Activated B cell treated with CpG ODN at 0.5 μM for 24 hours (primary cell): ENCODE measurements at regions of chr16 and their contacts with region 1.

Region 1: DNA sequence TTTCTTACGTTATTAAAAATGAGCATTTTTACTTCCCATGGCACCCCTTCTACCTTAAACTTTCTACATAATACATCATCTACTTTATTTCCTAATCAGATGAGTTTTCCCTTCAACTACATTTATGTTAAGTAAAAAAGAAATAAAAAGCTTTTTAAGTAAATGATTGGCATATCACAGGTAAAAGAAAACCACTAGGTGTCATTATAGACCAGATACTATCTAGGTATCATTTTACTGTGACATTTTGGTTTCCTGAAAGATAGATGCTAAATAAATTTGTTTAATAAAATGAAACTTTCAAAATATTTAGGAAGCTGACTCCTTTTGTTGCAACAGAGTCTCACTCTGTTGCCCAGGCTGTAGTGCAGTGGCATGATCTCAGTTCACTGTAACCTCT is 3.8 kb upstream of the CMTM1 start:
- DNase-seq: no peak
- ATAC-seq: no peak
- H3K4me3 Mint-ChIP-seq: no peak overlapping the region
- H3K27ac Mint-ChIP-seq: no peak overlapping the region
- H3K4me1 Mint-ChIP-seq: peaks cover 12% of the 10 kb centered on the region
- H3K27me3 Mint-ChIP-seq: no peaks in the 10 kb centered on the region
- CTCF ChIP-seq: no peak

Region 2: GRCh38 chr16:66728117-66728787 is 165.8 kb after region 1 on chr16:
- CTCF ChIA-PET with region 1: interaction called, 3 read pairs
- POLR2A ChIA-PET with region 1: no interaction called
- intact Hi-C with region 1: loop called (anchors 5 kb)
- DNase-seq: no peak
- ATAC-seq: peak; percentile 60
- H3K4me3 Mint-ChIP-seq: no peak overlapping the region
- H3K27ac Mint-ChIP-seq: no peak overlapping the region
- H3K4me1 Mint-ChIP-seq: peaks cover 2% of the 10 kb centered on the region
- H3K27me3 Mint-ChIP-seq: no peaks in the 10 kb centered on the region
- CTCF ChIP-seq: peak; percentile 71

Region 3: DNA sequence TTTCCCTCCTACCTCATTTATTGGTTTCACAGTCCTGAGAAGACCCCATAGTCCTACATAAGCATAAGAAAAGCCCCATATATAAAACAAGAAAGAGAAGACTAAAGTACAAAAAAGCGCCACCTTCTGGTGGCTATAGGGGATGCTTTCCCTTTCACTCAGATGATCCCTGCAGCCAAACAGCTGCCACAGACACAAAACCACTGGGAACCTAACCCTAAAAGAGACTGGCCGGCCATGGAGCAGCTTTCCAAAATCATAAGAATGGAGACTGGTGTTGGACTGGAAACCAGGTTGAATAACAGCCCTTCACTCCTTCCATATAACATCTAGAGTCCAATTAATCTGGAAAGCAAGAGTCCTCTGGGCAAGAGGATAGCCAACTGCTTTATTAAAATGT is 177.6 kb after region 1 on chr16:
- CTCF ChIA-PET with region 1: interaction called, 4 read pairs
- POLR2A ChIA-PET with region 1: no interaction called
- intact Hi-C with region 1: loop called (anchors 2 kb)
- DNase-seq: no peak
- ATAC-seq: no peak
- H3K4me3 Mint-ChIP-seq: no peak overlapping the region
- H3K27ac Mint-ChIP-seq: no peak overlapping the region
- H3K4me1 Mint-ChIP-seq: peaks cover 4% of the 10 kb centered on the region
- H3K27me3 Mint-ChIP-seq: no peaks in the 10 kb centered on the region
- CTCF ChIP-seq: no peak